GM12878 (cell line): ENCODE measurements at regions of chr6 and their contacts with region 1.

Region 1: DNA sequence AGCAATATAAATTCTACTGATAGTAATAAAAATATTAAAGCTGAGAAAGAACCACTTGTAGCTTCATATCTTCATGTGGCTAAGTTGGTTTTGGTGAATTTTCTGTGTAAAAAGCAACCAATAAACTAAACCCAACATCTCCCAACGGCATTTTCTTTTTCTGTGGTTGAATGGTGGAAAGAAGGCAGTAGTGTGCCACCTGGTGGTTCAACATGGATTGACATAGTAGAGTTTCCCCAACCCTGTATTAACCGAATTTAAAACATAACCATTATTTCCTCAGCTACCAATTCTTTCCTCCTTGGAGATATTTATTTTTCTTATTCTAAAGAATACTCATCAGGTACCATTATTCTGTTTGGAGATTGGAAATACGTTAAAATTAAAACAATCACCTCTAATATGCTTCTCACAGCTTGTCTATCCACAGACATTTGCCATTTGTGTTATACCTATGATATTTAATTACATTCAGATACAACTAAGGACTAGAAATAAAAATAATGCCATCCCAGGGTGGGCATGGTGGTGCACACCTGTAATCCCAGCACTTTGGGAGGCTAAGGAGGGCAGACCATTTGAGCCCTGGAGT is 117.1 kb upstream of the EEF1E1 start:
- DNase-seq: no peak
- ATAC-seq: peak; percentile 84
- H3K4me3 ChIP-seq: no peak overlapping the region
- H3K27ac ChIP-seq: no peak overlapping the region
- H3K4me1 ChIP-seq: no peaks in the 10 kb centered on the region
- H3K27me3 ChIP-seq: no peaks in the 10 kb centered on the region; a peak in 2 of 4 replicates
- CTCF ChIP-seq: peak; percentile 63 to 76 (median 70)
- EP300 ChIP-seq: no peak
- POLR2A ChIP-seq: no peak
- RAD21 ChIP-seq: peak; percentile 85

Region 2: GRCh38 chr6:6712258-6712999 is 1507.0 kb before region 1 on chr6:
- CTCF ChIA-PET with region 1: no interaction called
- POLR2A ChIA-PET with region 1: no interaction called
- RAD21 ChIA-PET with region 1: no interaction called
- SMC1A ChIA-PET with region 1: no interaction called
- in situ Hi-C with region 1: no loop called
- intact Hi-C with region 1: no loop called
- DNase-seq: no peak
- ATAC-seq: peak; percentile 25; the same call in 2 of the 3 replicates
- H3K4me3 ChIP-seq: no peak overlapping the region
- H3K27ac ChIP-seq: 0 out of 2 replicates have a peak overlapping the region, but pooled peaks have one; percentile 10
- H3K4me1 ChIP-seq: peaks cover 23% of the 10 kb centered on the region
- H3K27me3 ChIP-seq: no peaks in the 10 kb centered on the region
- CTCF ChIP-seq: peak in 1 of 3 experiments; percentile 11; a peak in 1 of 6 replicates
- EP300 ChIP-seq: no peak
- POLR2A ChIP-seq: no peak
- RAD21 ChIP-seq: 0 out of 2 replicates have a peak, but pooled peaks have one; percentile 23

Region 3: GRCh38 chr6:7865781-7866180 is 353.7 kb before region 1 on chr6:
- CTCF ChIA-PET with region 1: no interaction called
- POLR2A ChIA-PET with region 1: no interaction called
- RAD21 ChIA-PET with region 1: no interaction called
- SMC1A ChIA-PET with region 1: no interaction called
- in situ Hi-C with region 1: no loop called
- intact Hi-C with region 1: no loop called
- DNase-seq: no peak
- ATAC-seq: no peak
- H3K4me3 ChIP-seq: no peak overlapping the region
- H3K27ac ChIP-seq: no peak overlapping the region
- H3K4me1 ChIP-seq: no peaks in the 10 kb centered on the region
- H3K27me3 ChIP-seq: no peaks in the 10 kb centered on the region
- CTCF ChIP-seq: no peak
- EP300 ChIP-seq: no peak
- POLR2A ChIP-seq: no peak
- RAD21 ChIP-seq: no peak

Region 4: DNA sequence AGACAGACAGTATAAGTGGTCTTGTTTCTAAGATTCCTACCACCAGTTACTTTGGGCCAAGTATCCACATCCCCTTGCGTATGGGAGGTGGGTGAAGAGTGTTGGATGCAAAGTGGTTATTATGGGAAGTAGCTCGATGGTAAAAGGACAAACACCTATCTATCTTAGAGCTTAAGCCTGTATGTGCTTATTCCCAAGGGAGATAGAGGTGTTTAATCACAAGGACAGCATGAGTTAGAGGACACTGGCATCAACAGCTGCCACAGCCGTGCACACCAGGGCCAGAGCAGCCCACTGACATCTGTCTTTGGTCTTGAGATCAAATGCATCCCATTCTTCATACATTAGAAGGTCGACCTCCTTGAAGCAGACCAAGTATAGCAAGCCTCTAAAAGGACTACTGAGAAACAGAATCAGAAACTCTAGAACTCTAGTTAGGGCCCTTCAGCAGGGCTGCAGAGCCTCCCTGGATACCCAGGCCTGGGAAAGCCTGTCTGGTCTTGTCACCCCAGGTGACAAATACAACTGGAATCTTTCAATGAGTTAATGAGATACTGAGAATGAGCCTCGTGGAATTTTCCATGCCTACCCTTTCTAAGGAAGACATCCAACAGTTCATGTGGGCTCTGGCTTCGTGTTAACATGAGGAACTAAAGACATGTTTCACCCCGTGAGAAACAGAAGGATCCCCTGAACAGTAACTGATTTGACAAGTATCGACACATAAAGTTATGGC is 337.5 kb before region 1 on chr6:
- CTCF ChIA-PET with region 1: no interaction called
- POLR2A ChIA-PET with region 1: no interaction called
- RAD21 ChIA-PET with region 1: no interaction called
- SMC1A ChIA-PET with region 1: no interaction called
- in situ Hi-C with region 1: no loop called
- intact Hi-C with region 1: loop called (anchors 5 kb)
- DNase-seq: no peak
- ATAC-seq: no peak
- H3K4me3 ChIP-seq: no peak overlapping the region
- H3K27ac ChIP-seq: no peak overlapping the region
- H3K4me1 ChIP-seq: no peaks in the 10 kb centered on the region
- H3K27me3 ChIP-seq: no peaks in the 10 kb centered on the region
- CTCF ChIP-seq: no peak
- EP300 ChIP-seq: no peak
- POLR2A ChIP-seq: peak; percentile 38; the same call in 1 of the 2 replicates
- RAD21 ChIP-seq: no peak

Region 5: GRCh38 chr6:8123236-8123635 is 96.2 kb before region 1 on chr6:
- CTCF ChIA-PET with region 1: interaction called, 335 read pairs
- POLR2A ChIA-PET with region 1: no interaction called
- RAD21 ChIA-PET with region 1: interaction called, 203 read pairs
- SMC1A ChIA-PET with region 1: interaction called, 7 read pairs
- in situ Hi-C with region 1: no loop called
- intact Hi-C with region 1: no loop called
- DNase-seq: no peak
- ATAC-seq: no peak
- H3K4me3 ChIP-seq: no peak overlapping the region
- H3K27ac ChIP-seq: no peak overlapping the region
- H3K4me1 ChIP-seq: no peaks in the 10 kb centered on the region
- H3K27me3 ChIP-seq: no peaks in the 10 kb centered on the region
- CTCF ChIP-seq: no peak
- EP300 ChIP-seq: no peak
- POLR2A ChIP-seq: no peak
- RAD21 ChIP-seq: no peak

Region 6: GRCh38 chr6:8143945-8144344 is 75.5 kb before region 1 on chr6:
- CTCF ChIA-PET with region 1: interaction called, 25 read pairs
- POLR2A ChIA-PET with region 1: no interaction called
- RAD21 ChIA-PET with region 1: interaction called, 6 read pairs
- SMC1A ChIA-PET with region 1: interaction called, 14 read pairs
- in situ Hi-C with region 1: no loop called
- intact Hi-C with region 1: no loop called
- DNase-seq: no peak
- ATAC-seq: no peak
- H3K4me3 ChIP-seq: no peak overlapping the region
- H3K27ac ChIP-seq: no peak overlapping the region
- H3K4me1 ChIP-seq: no peaks in the 10 kb centered on the region
- H3K27me3 ChIP-seq: no peaks in the 10 kb centered on the region
- CTCF ChIP-seq: no peak
- EP300 ChIP-seq: no peak
- POLR2A ChIP-seq: no peak
- RAD21 ChIP-seq: no peak

Region 7: GRCh38 chr6:8195040-8195713 is 24.3 kb before region 1 on chr6:
- CTCF ChIA-PET with region 1: interaction called, 31 read pairs
- POLR2A ChIA-PET with region 1: no interaction called
- RAD21 ChIA-PET with region 1: no interaction called
- SMC1A ChIA-PET with region 1: interaction called, 8 read pairs
- in situ Hi-C with region 1: no loop called
- intact Hi-C with region 1: no loop called
- DNase-seq: no peak
- ATAC-seq: no peak
- H3K4me3 ChIP-seq: no peak overlapping the region
- H3K27ac ChIP-seq: no peak overlapping the region
- H3K4me1 ChIP-seq: no peaks in the 10 kb centered on the region
- H3K27me3 ChIP-seq: no peaks in the 10 kb centered on the region
- CTCF ChIP-seq: no peak
- EP300 ChIP-seq: no peak
- POLR2A ChIP-seq: no peak
- RAD21 ChIP-seq: no peak